Prostate gland (tissue), 2 donors: ENCODE measurements at regions of chr22 and their contacts with region 1.

Region 1: GRCh38 chr22:46110215-46110614 is 40.1 kb upstream of the PPARA start:
- DNase-seq: no peak
- H3K4me3 ChIP-seq: no peak overlapping the region
- H3K27ac ChIP-seq: peak overlapping the region; percentile 89 to 91
- H3K4me1 ChIP-seq: peaks cover 42% of the 10 kb centered on the region
- H3K27me3 ChIP-seq: no peaks in the 10 kb centered on the region
- CTCF ChIP-seq: no peak
- POLR2A ChIP-seq: peak; percentile 19

Region 2: DNA sequence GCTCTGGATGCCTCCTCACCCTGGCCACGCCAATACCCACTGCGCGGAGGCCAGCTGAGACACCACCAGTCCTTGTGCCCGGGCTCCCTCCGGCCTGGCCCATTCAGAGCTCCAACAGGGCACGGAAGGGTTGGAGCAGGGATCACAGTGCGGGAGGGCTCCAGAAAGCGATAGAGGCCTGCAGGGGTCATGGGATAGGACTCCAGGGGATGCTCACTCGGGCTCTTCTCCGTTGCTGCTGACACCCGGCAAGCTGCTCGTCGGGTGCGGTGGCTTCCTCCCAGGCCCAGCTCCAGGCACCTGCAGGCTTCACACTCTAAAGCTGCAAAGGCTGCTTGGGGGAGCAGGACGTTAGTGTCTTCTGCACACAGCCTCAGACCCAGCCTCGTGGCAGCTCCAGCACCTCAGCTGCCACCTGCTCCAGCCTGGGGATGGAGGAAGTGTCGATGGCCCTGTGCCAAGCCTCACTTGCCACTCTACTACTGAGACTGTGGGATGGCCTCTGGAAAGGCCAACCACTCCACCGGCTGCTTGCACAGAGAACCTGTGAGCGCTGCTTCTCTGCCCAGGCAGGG is 143.8 kb before region 1 on chr22:
- intact Hi-C with region 1: no loop called
- DNase-seq: no peak
- H3K4me3 ChIP-seq: no peak overlapping the region
- H3K27ac ChIP-seq: no peak overlapping the region
- H3K4me1 ChIP-seq: no peaks in the 10 kb centered on the region
- H3K27me3 ChIP-seq: no peaks in the 10 kb centered on the region
- CTCF ChIP-seq: no peak
- POLR2A ChIP-seq: no peak

Region 3: GRCh38 chr22:45994491-45995404 is 115.5 kb before region 1 on chr22:
- intact Hi-C with region 1: no loop called
- DNase-seq: peak; percentile 65
- H3K4me3 ChIP-seq: no peak overlapping the region
- H3K27ac ChIP-seq: no peak overlapping the region
- H3K4me1 ChIP-seq: peaks cover 8% of the 10 kb centered on the region
- H3K27me3 ChIP-seq: no peaks in the 10 kb centered on the region
- CTCF ChIP-seq: peak; percentile 97 to 98 (median 98)
- POLR2A ChIP-seq: no peak

Region 4: DNA sequence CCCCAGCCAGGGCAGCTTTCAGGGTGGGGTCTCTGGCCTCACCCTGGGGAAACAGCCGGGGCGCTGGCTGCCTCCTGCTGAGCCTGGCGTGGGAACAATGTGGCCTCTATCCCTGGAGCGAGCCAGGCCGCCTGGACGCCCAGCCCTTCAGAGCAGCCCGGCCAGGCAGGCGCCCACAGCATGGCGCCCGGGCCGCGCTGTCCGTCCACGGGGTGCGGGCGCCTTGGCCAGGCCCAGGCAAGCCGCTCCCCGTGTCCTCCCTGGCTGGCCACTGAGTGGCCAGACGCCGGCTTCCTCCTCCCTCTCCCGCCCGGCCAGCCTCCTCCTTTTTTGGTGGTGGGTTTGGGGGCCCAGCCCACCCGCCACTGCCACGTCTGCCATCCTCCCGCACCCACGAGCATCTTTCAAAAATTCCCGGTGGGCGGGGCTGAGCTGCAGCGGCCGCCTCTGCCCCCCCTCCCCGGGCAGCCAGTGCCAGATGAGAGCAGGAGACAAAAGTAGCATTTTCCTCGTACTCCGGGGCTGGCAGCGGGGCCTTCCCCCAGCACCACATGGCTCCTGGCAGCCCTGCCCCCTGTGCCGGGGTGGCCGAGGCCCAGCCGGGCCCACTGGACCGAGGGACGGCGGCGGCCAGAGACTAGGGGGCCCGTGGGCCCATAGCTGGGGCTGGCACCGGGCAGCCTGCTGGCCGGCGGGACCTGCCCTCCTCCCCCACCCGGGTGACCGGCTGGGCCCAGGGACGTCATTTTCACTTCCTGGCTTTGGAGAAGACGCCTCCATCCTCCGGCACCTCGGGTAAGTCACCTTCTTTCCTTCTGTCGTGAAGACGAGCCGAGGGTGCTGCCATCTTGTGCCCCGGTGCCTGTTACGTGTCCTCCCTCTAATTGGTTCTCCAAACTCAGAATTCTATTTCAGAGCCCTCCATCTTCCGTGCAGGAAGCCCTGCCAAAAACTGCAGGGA is 30.1 kb before region 1 on chr22:
- intact Hi-C with region 1: loop called (anchors 5 kb)
- DNase-seq: peak; percentile 79
- H3K4me3 ChIP-seq: peak overlapping the region; percentile 30 to 93
- H3K27ac ChIP-seq: peak overlapping the region; percentile 96 to 99
- H3K4me1 ChIP-seq: peaks cover 33% of the 10 kb centered on the region
- H3K27me3 ChIP-seq: no peaks in the 10 kb centered on the region
- CTCF ChIP-seq: peak in 1 of 4 experiments; percentile 15
- POLR2A ChIP-seq: peak; percentile 54

Region 5: GRCh38 chr22:46229701-46230100 is 119.5 kb after region 1 on chr22:
- intact Hi-C with region 1: no loop called
- DNase-seq: no peak
- H3K4me3 ChIP-seq: no peak overlapping the region
- H3K27ac ChIP-seq: no peak overlapping the region
- H3K4me1 ChIP-seq: no peaks in the 10 kb centered on the region
- H3K27me3 ChIP-seq: no peaks in the 10 kb centered on the region
- CTCF ChIP-seq: no peak
- POLR2A ChIP-seq: no peak